ENCODE measurements at regions of chr3 and their contacts with region 1.

Region 1: GRCh38 chr3:32460031-32460749 is 42.5 kb downstream of the CMTM6 start:
- DNase-seq: peak; percentile 61
- ATAC-seq: peak; percentile 72
- H3K4me3 Mint-ChIP-seq: peak overlapping the region; percentile 74
- H3K27ac Mint-ChIP-seq: no peak overlapping the region
- H3K4me1 Mint-ChIP-seq: peaks cover 55% of the 10 kb centered on the region
- H3K27me3 Mint-ChIP-seq: no peaks in the 10 kb centered on the region
- CTCF ChIP-seq: no peak

Region 2: DNA sequence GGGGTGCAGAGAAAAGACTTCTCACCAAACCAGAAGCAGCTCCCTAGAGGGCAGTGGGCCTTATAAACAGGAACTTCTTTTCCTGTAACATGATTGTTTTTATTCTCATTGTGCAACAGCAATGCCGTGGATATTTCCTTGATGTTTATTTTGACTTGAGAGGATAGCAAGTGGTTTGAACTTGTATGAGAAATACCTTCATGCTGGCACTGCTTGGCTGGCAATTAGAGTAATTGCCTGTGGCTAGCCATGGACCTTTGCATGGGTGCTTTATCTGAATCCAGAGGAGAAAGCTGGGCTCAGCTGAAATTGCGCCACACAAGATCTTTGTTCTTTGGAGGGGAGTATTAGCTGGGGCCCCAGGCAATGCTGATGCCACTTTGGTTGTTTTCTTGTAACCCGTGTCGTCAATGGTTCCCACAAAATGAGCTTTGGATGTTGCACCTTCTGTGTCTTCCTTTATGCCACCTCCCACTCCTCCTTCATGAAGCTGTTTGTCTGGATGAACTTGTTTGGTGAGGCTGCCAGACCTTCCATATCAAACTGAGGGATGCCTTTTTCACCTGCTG is 183.8 kb before region 1 on chr3:
- CTCF ChIA-PET with region 1: no interaction called
- POLR2A ChIA-PET with region 1: no interaction called
- intact Hi-C with region 1: no loop called
- DNase-seq: no peak
- ATAC-seq: no peak
- H3K4me3 Mint-ChIP-seq: no peak overlapping the region
- H3K27ac Mint-ChIP-seq: no peak overlapping the region
- H3K4me1 Mint-ChIP-seq: peaks cover 7% of the 10 kb centered on the region
- H3K27me3 Mint-ChIP-seq: peaks cover 3% of the 10 kb centered on the region
- CTCF ChIP-seq: no peak

Region 3: DNA sequence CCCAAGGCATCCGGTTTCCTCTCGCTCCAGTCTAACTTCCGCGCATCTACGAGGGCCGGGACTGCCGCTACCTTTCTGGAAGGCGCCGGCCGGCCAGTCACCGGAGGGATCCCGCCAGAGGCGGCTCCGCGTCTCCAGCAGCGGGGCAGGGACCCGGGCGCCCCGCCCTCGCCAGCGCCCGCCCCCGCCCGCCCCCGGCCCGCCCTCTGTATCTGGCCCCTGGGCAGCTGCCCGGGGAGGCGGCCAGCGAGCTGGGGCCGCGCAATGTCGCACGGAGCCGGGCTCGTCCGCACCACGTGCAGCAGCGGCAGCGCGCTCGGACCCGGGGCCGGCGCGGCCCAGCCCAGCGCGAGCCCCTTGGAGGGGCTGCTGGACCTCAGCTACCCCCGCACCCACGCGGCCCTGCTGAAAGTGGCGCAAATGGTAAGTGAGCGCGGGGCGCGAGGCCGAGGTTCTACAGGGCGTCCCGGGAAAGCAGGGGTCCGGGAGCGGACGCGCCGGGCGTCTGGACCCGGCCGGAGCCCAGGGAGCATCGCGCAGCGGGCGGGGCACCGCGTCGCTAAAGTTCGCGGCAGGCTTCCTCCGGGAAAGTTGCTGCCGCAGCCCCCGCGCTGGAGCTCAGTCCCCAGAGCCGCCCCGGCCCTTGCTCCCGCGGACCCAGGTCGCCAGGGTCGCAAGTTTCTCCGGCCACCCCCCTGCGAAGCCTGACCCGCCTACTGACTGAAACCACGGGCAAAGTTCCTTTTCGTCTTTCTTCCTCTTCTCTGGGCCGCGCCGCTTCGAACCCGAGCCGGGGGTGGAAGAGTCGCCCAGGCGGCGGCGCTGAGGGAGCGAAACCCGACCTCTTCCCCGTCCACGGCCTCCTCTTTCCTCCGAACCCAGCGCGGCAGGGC is 68.3 kb before region 1 on chr3 and contains the start of gene CMTM7:
- CTCF ChIA-PET with region 1: no interaction called
- POLR2A ChIA-PET with region 1: interaction called, 16 read pairs
- intact Hi-C with region 1: no loop called
- DNase-seq: peak; percentile 65
- ATAC-seq: peak; percentile 64
- H3K4me3 Mint-ChIP-seq: peak within 1 kb of the TSS; percentile 97
- H3K27ac Mint-ChIP-seq: peak within 1 kb of the TSS; percentile 90
- H3K4me1 Mint-ChIP-seq: peaks cover 56% of the 10 kb centered on the region
- H3K27me3 Mint-ChIP-seq: no peaks in the 10 kb centered on the region
- CTCF ChIP-seq: no peak
- total RNA-seq, gene CMTM7: 70.5 and 82.1 TPM in 2 replicates

Region 4: DNA sequence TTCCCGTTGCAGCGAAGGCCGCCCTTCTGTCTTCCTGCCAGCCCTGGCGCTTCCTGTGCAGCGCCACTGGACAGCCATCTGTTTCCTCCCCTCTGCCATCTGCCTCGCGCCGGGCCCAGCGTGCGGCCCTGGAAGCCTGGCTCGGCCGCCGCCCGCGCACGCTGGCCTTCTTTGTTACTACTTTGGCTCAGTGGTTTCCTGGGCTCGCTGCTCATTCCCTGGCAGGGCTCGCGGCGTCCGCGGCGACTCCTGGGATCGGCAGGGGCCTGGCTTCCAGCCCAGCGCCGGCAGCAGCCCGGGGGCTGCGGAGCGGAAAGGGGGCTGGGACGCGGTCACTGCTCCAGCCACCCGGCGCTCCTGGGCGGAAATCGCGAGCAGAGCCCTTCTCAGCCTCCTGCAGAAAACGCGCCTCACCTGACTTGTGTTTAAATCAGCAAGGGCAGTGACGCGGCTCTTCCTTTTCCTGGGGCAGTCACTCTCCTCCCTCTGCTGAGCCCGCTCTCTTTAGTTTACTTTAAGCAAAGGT is 58.6 kb before region 1 on chr3:
- CTCF ChIA-PET with region 1: interaction called, 3 read pairs
- POLR2A ChIA-PET with region 1: interaction called, 10 read pairs
- intact Hi-C with region 1: loop called (anchors 1 kb)
- DNase-seq: peak; percentile 45
- ATAC-seq: peak; percentile 71
- H3K4me3 Mint-ChIP-seq: peak overlapping the region; percentile 89
- H3K27ac Mint-ChIP-seq: peak overlapping the region; percentile 97
- H3K4me1 Mint-ChIP-seq: peaks cover 86% of the 10 kb centered on the region
- H3K27me3 Mint-ChIP-seq: no peaks in the 10 kb centered on the region
- CTCF ChIP-seq: no peak

Measured in activated B cell treated with CpG ODN at 0.5 μM for 24 hours (primary cell).